KBM-7 (cell line): ENCODE measurements at regions of chr16 and their contacts with region 1.

Region 1: DNA sequence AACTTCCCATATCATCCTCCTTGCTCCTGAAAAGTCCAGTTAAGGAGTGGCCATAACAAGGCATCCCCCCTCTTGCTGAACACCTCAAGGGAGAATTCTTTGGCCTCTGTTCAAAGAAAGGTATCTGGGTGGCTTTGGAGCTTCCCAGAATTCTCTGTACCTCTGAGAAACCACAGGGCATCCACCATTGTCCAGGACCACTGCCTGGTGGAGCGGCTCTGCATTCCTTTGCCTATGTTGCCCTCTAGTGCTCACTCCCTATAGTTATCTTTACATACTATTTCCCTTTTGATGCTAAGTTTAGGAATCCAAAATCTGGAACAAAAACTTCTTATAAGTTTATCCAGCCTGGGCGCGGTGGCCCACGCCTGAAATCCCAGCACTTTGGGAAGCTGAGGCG is 30.3 kb downstream of the CHD9NB start:
- DNase-seq: peak; percentile 57

Region 2: GRCh38 chr16:52191531-52192134 is 830.7 kb before region 1 on chr16:
- in situ Hi-C with region 1: loop called (anchors 25 kb)
- DNase-seq: peak; percentile 59

Region 3: DNA sequence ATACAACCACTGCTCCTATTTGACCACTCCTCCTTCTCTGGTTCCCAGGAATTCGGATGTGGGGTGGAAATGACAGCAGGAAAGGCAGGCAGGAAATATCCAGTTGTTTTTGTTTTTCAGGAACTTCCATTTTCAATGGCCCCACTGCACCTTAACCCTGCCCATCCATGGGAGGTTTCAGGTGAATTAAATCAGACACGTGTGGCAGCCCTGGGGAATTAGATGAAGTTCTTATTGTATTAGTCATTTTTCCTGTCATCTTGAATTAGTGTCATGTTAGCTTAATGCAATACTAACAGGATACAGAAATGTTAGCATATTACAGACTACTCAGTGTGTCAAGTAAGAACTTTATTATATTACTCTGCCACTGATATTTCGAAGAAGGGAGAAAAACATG is 116.1 kb before region 1 on chr16:
- in situ Hi-C with region 1: no loop called
- DNase-seq: no peak